Left ventricle myocardium superior (tissue), 1 donor: ENCODE measurements at regions of chr2 and their contacts with region 1.

Region 1: GRCh38 chr2:215454519-215455246 is 18.8 kb upstream of the FN1 start:
- DNase-seq: no peak
- ATAC-seq: no peak

Region 2: GRCh38 chr2:215110918-215111317 is 343.8 kb before region 1 on chr2:
- intact Hi-C with region 1: no loop called
- DNase-seq: no peak
- ATAC-seq: no peak

Region 3: GRCh38 chr2:215540650-215541049 is 86.0 kb after region 1 on chr2:
- intact Hi-C with region 1: no loop called
- DNase-seq: no peak
- ATAC-seq: peak; percentile 76

Region 4: DNA sequence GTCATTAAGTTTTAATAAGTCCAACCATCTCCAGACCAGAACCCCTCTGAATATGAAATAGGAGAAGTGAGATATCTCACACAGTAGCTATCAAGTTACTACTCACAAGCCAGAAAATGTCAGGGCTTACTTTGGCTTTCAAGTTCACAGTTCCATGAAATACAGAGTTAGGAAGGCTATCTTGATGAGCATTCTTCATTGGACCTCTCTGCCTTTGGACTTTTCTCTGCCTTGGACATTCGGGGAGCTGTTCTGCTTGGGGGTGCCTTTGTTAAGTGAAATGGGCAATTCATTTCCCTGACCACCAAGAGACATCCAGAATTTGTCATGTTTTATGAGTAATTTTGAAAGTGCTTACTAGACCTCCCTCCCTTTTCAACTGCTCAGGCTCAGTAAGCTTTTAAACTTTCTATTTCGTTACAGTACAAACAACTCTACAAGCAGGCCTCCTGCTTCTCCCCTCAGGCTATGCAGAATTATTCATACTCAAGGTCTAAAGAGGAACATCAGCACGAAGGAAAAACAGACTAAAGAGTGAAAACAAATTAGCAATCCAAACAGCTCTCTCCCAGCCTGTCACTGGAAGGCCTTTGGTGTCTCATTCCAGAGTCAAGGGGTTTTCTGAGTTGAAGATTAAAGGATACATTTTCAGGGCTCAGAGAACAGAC is 463.4 kb after region 1 on chr2:
- intact Hi-C with region 1: loop called (anchors 10 kb)
- DNase-seq: no peak
- ATAC-seq: no peak